AG04450 (cell line): ENCODE measurements at regions of chr11 and their contacts with region 1.

Region 1: GRCh38 chr11:130861902-130862860 is 54.1 kb downstream of the SNX19 start:
- DNase-seq: peak; percentile 93
- H3K4me3 ChIP-seq: no peak overlapping the region
- H3K27ac ChIP-seq: no peak overlapping the region
- H3K27me3 ChIP-seq: no peaks in the 10 kb centered on the region
- CTCF ChIP-seq: peak; percentile 100

Region 2: DNA sequence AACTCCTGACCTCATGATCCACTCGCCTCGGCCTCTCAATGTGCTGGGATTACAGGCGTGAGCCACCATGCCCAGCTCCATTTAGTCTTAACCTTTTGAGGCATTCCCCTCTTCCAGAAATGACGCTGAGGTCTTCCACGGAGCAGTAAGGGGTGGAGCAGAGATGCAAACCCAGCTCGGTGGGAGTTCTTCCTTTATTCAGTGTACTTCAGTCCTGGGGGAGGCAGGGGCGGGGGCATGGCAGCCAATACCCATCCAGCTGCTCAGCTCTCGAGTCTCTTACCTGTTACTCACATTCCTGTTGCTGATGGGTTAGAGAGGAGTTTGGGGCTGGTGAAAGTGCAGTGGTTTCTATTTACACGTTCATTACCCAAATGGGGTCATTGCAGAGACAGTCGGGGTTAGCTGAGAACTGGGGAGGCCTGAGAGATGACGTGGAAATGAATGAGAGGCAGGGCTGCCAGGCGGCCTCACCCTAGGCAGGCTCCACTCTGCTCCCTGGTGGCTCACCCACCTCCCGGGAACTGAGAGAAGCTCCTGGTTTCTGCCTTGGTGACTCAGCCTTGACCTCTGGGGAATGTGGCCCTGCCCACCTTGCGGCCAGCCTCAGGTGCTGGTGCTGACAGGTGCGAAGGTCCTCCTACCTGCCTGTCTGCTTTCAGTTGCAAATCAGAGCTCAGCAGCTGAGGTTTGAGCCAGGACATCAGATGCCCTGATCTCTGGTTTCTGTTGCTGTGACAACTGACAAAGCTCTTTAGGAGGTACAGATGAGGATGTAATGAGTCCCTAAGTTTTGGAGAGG is 716.0 kb before region 1 on chr11:
- CTCF ChIA-PET with region 1: no interaction called
- POLR2A ChIA-PET with region 1: no interaction called
- DNase-seq: no peak
- H3K4me3 ChIP-seq: no peak overlapping the region
- H3K27ac ChIP-seq: no peak overlapping the region
- H3K27me3 ChIP-seq: no peaks in the 10 kb centered on the region
- CTCF ChIP-seq: peak; percentile 29

Region 3: DNA sequence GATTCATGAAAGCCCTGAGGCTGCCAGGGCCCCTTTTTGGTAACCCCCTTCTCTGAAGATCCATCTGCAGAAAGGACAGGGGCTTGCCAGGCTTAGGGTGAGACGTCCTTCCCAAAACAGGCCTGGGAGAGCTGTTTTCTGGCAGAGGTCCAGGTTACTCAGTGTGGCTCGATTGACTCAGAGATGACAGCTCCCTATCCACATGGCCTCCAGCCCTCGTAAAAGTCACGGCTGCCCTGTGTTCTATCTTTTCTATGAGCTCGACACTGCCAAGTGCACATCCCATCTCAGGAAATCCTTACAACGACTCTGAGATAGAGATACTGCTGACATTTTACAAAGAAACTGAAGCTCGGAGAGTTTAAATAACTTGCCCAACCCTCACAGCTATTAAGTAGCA is 454.2 kb before region 1 on chr11:
- CTCF ChIA-PET with region 1: no interaction called
- POLR2A ChIA-PET with region 1: no interaction called
- DNase-seq: no peak
- H3K4me3 ChIP-seq: no peak overlapping the region
- H3K27ac ChIP-seq: no peak overlapping the region
- H3K27me3 ChIP-seq: no peaks in the 10 kb centered on the region
- CTCF ChIP-seq: no peak

Region 4: GRCh38 chr11:130442737-130443136 is 419.4 kb before region 1 on chr11:
- CTCF ChIA-PET with region 1: interaction called, 331 read pairs
- POLR2A ChIA-PET with region 1: interaction called, 3 read pairs
- DNase-seq: no peak
- H3K4me3 ChIP-seq: no peak overlapping the region
- H3K27ac ChIP-seq: no peak overlapping the region
- H3K27me3 ChIP-seq: no peaks in the 10 kb centered on the region
- CTCF ChIP-seq: no peak

Region 5: GRCh38 chr11:130601141-130601540 is 261.0 kb before region 1 on chr11:
- CTCF ChIA-PET with region 1: no interaction called
- POLR2A ChIA-PET with region 1: no interaction called
- DNase-seq: no peak
- H3K4me3 ChIP-seq: no peak overlapping the region
- H3K27ac ChIP-seq: peak overlapping the region; percentile 52
- H3K27me3 ChIP-seq: no peaks in the 10 kb centered on the region
- CTCF ChIP-seq: no peak

Region 6: DNA sequence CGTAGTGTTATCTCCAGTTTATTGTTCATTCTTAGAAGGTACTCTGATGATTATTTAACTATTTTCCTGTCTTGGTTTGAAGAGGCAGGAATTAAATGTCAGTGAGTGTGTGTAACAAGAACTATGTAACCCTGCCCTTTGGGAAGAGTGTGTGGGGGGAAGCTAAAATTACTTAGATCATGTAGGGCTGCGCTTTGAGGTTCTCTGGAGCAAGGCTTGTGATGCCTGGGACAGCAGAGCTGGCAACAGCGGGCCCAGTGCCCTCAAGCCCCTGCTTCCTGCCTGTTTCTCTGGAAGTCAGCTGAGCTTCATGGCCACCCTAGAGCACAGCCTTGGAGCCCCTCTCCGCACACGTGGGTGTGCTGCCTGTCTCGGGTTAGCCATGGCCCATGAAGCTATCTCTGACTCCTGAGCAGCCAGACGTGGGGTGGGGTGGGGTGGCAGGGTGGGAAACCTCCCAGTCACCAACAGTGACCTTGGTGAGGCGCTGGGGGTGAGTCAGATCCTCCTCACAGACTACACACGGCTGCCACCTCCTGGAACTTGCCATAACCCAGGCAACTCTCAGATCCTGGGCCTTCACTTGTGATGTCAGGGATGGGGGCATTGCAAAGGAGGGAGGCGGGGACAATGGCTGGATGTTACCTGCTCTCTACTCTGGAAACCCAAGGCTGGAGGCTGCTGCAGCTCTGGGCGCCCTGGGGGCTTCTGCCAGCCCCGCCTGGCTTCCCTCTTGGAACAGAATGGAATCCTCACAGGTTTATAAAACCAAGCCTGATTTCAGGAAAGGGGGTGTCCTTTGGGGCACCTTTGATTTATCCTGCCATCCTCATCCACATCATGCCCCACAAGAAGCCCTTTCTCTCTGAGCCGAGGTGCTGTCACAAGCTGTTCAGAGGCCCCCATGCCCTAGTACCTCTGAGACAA is 34.5 kb before region 1 on chr11:
- CTCF ChIA-PET with region 1: interaction called, 16 read pairs
- POLR2A ChIA-PET with region 1: no interaction called
- DNase-seq: peak; percentile 43
- H3K4me3 ChIP-seq: no peak overlapping the region
- H3K27ac ChIP-seq: peak overlapping the region; percentile 34
- H3K27me3 ChIP-seq: peaks cover 5% of the 10 kb centered on the region
- CTCF ChIP-seq: peak; percentile 70

Region 7: GRCh38 chr11:130847517-130847916 is 14.7 kb before region 1 on chr11:
- CTCF ChIA-PET with region 1: interaction called, 25 read pairs
- POLR2A ChIA-PET with region 1: no interaction called
- DNase-seq: peak; percentile 20
- H3K4me3 ChIP-seq: peak overlapping the region; percentile 18; the same call in 1 of the 2 replicates
- H3K27ac ChIP-seq: no peak overlapping the region
- H3K27me3 ChIP-seq: no peaks in the 10 kb centered on the region
- CTCF ChIP-seq: no peak

Region 8: GRCh38 chr11:130882138-130882551 is 20.0 kb after region 1 on chr11:
- CTCF ChIA-PET with region 1: interaction called, 29 read pairs
- POLR2A ChIA-PET with region 1: no interaction called
- DNase-seq: no peak
- H3K4me3 ChIP-seq: no peak overlapping the region
- H3K27ac ChIP-seq: no peak overlapping the region
- H3K27me3 ChIP-seq: no peaks in the 10 kb centered on the region
- CTCF ChIP-seq: no peak